ENCODE measurements at regions of chr13 and their contacts with region 1.

Region 1: DNA sequence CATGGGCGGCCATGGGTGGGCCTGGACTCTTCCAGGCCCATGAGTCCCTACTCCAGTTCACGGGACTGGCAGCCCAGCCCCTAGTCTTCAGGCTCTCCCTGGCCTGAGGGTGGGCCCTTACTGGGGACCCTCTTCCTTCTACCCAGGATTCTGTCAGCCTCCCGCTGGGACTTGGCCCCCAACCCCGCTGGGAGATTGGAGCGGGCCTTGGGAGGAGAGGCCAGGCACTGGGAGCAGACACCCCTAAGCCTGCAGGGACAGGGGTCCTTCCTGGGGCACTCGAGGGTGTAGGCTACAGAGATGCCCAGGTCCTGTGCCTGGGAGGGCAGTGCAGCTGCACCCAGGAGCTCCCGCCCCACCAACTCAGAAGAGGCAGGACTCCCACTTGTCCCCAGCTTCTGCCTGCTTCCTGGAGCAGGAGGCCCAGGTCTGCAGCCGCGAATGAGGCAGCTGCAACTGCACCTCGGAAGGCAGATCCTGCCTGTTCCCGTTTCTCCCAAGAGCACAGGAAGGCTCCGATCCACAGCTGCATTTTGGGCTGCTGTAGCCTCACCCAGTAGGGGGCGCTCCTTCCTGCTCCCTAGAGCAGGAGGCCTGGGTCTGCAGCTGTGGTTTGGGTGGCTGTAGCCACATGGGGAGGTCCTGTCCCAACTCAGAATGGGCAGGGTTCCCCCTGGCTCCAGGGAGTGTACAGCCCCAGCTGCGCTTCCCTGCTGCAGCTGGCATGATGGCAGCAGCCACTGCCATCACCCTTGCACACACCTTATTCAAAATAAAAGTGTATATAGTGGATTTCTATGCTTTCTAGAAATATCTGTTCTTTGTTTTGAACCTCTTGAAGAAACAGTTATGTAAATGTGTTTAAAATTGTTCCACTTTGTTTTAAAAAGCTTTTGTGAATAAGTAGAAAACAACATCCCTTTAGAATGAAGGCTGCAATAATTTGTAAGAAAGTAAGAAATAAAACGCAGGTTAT is 46.8 kb downstream of the TEX26 start:
- DNase-seq: no peak
- H3K4me3 ChIP-seq: no peak overlapping the region
- H3K27ac ChIP-seq: no peak overlapping the region
- H3K4me1 ChIP-seq: peaks cover 0 to 14% of the 10 kb centered on the region in 2 donors
- H3K27me3 ChIP-seq: no peaks in the 10 kb centered on the region
- CTCF ChIP-seq: peak in 1 of 3 experiments; percentile 44

Region 2: GRCh38 chr13:30905932-30906383 is 73.3 kb before region 1 on chr13 and contains the start of gene MEDAG:
- intact Hi-C with region 1: loop called (anchors 2 kb)
- DNase-seq: peak; percentile 76 to 96
- H3K4me3 ChIP-seq: peak within 1 kb of the TSS; percentile 56 to 81
- H3K27ac ChIP-seq: peak within 1 kb of the TSS; percentile 95 to 98
- H3K4me1 ChIP-seq: peaks cover 0 to 21% of the 10 kb centered on the region in 2 donors
- H3K27me3 ChIP-seq: no peaks in the 10 kb centered on the region
- CTCF ChIP-seq: no peak
- total RNA-seq, gene MEDAG: 98.8 TPM

Region 3: DNA sequence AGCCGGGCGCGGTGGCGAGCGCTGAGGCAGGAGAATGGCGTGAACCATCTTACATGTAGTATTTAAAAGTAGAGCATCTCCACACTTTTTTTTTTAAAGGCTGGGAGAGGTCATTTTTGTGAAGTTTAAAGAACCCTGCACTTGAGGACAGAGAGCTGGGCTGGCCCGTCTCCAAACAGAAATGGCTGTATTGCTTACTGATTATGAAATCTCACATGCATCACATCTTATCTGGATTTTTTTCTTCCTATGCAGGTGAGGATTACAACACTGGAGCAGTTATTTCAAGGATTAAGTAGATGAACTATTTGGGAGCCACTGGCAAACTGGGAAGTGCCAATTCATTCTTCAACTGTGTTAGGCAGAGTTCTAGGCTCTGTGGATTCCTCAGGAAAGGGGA is 12.7 kb after region 1 on chr13:
- intact Hi-C with region 1: no loop called
- DNase-seq: no peak
- H3K4me3 ChIP-seq: no peak overlapping the region
- H3K27ac ChIP-seq: no peak overlapping the region
- H3K4me1 ChIP-seq: no peaks in the 10 kb centered on the region
- H3K27me3 ChIP-seq: no peaks in the 10 kb centered on the region
- CTCF ChIP-seq: no peak

Region 4: DNA sequence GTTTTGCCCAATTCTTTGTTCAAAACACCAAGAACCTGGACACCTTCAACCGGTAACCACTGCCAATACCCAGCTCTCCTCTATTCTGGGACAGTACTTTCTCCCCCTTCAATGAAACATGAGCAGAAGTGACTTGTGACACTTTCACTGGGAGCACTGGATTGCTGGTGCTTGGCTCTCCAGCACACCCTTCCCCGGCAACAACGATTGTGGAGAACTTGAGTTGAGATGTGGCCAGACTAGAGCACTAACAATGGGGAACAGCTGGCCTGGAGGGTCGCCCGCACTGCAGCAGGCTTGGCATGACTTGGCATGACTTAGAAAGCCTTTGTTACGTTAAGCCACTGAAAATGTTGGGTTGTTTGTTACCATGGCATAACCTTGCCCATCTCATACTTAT is 213.0 kb after region 1 on chr13:
- intact Hi-C with region 1: no loop called
- DNase-seq: no peak
- H3K4me3 ChIP-seq: no peak overlapping the region
- H3K27ac ChIP-seq: no peak overlapping the region
- H3K4me1 ChIP-seq: no peaks in the 10 kb centered on the region
- H3K27me3 ChIP-seq: no peaks in the 10 kb centered on the region
- CTCF ChIP-seq: no peak

Measured in ascending aorta (tissue), 2 donors.